Activated T-helper 2 cell treated with anti-CD3 and anti-CD28 coated beads, Interferon-gamma antibody, Interleukin-2, Interleukin-4, amounts not matched to agents 10 μg/mL and 5 μg/mL and 100 μg/mL, durations not matched to agents 14 hours and 24 hours and 36 hours (primary cell): ENCODE measurements at regions of chr4 and their contacts with region 1.

Region 1: GRCh38 chr4:1856042-1856788 is at the start of gene LETM1:
- DNase-seq: peak; percentile 93
- H3K4me3 Mint-ChIP-seq: peak within 1 kb of the TSS; percentile 86
- H3K27ac Mint-ChIP-seq: peak within 1 kb of the TSS; percentile 70
- H3K4me1 Mint-ChIP-seq: peaks cover 32% of the 10 kb centered on the region
- H3K27me3 Mint-ChIP-seq: no peaks in the 10 kb centered on the region
- total RNA-seq, gene LETM1: 76.6 and 78.6 TPM in 2 replicates

Region 2: DNA sequence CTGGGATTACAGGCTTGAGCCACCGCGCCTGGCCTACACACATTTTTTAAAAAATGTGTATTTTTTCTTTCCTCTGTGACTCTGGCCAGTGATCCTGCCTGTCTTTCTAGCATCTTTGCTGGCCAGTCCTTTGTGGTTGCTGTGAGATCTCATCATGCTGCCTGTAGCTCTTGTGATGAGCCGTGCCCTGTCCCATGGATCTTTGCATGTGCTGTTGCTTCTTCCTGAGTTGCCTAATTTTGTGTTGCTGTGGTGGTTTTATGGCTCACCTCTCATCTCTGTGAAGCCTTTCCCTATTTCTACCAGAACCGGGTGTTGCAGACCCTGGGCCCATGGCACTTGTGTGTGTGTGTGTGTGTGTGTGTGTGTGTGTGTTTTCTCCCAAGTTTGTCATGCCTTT is 23.3 kb after region 1 on chr4:
- intact Hi-C with region 1: no loop called
- DNase-seq: no peak
- H3K4me3 Mint-ChIP-seq: no peak overlapping the region
- H3K27ac Mint-ChIP-seq: peak overlapping the region; percentile 46
- H3K4me1 Mint-ChIP-seq: peaks cover 47% of the 10 kb centered on the region
- H3K27me3 Mint-ChIP-seq: no peaks in the 10 kb centered on the region

Region 3: GRCh38 chr4:1899149-1900086 is 43.2 kb after region 1 on chr4:
- intact Hi-C with region 1: loop called (anchors 1 kb)
- DNase-seq: peak; percentile 65
- H3K4me3 Mint-ChIP-seq: peak overlapping the region; percentile 44
- H3K27ac Mint-ChIP-seq: peak overlapping the region; percentile 89
- H3K4me1 Mint-ChIP-seq: peaks cover 44% of the 10 kb centered on the region
- H3K27me3 Mint-ChIP-seq: no peaks in the 10 kb centered on the region